Activated CD4-positive, alpha-beta T cell treated with anti-CD3 and anti-CD28 coated beads for 36 hours (primary cell): ENCODE measurements at regions of chr10 and their contacts with region 1.

Region 1: GRCh38 chr10:60032723-60033122 is 126.4 kb upstream of the CCDC6 start:
- DNase-seq: peak; percentile 74
- ATAC-seq: peak; percentile 63
- H3K4me3 Mint-ChIP-seq: no peak overlapping the region
- H3K27ac Mint-ChIP-seq: no peak overlapping the region
- H3K4me1 Mint-ChIP-seq: peaks cover 9% of the 10 kb centered on the region
- H3K27me3 Mint-ChIP-seq: no peaks in the 10 kb centered on the region

Region 2: DNA sequence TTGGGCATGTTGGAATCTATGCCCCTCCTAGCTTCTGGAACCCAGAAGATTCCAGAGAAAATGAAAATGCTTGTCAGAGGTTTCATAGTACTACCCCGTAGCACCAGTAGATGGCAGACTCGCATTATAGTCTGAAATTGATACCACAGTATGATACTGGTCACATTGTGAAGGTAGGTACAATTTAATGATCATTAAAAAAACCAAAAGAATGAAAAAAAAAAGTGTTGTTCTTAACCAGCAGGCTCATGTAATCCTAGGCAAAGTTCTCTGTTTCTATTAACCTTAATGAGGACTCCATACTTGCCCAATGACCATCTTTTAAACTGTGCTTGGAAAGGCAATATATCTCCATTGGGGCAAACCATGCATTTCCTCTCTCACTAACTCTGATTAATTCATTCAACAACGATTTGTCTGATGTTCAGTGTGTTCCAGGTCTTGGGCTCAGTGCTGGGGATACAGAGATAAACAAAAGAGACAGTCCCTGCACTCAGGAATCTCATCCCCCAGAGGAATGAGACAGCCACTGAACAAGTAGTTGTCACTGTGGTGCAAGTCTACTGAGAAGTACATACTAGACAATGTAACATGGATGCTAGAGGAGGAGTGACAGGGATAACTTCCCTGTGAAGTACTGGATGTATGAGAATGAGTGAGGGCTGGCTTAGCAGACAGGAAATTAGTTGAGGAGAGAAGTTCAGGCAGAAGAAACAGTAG is 1079.8 kb before region 1 on chr10:
- CTCF ChIA-PET with region 1: interaction called, 3 read pairs
- POLR2A ChIA-PET with region 1: no interaction called
- intact Hi-C with region 1: loop called in 1 of 2 experiments (anchors 10 kb)
- DNase-seq: peak; percentile 29
- ATAC-seq: no peak
- H3K4me3 Mint-ChIP-seq: no peak overlapping the region
- H3K27ac Mint-ChIP-seq: no peak overlapping the region
- H3K4me1 Mint-ChIP-seq: no peaks in the 10 kb centered on the region
- H3K27me3 Mint-ChIP-seq: peaks cover 3% of the 10 kb centered on the region

Region 3: DNA sequence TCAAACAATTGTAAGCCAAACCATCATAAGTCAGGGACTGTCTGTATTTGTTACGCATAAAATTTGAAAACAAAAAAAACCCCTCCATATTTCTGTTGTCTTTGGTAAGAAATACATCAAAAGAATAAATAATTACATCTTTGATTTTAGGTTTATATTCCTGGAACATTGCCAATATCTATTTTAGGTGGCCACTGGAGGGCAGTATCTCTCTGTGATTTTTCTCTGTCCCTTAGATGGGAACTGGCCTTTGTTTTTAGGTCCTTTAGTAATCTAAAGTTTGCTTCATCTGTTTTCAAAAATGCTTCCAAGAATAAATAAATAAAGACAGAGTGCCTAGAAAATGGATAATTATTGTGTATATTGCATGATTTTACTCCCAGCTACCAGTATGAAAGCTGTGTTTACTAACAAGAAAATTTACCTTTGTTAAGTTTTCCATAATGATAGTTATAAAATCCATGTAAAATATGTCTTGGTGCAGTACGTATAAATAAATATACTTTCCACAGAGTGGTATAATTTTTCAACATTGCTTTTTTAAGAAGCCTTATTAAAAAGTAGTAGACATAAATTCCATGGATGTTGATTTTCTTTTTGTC is 792.0 kb before region 1 on chr10:
- CTCF ChIA-PET with region 1: no interaction called
- POLR2A ChIA-PET with region 1: no interaction called
- intact Hi-C with region 1: loop called in 1 of 2 experiments (anchors 5 kb)
- DNase-seq: peak; percentile 4
- ATAC-seq: no peak
- H3K4me3 Mint-ChIP-seq: no peak overlapping the region
- H3K27ac Mint-ChIP-seq: no peak overlapping the region
- H3K4me1 Mint-ChIP-seq: no peaks in the 10 kb centered on the region
- H3K27me3 Mint-ChIP-seq: peaks cover 5% of the 10 kb centered on the region

Region 4: DNA sequence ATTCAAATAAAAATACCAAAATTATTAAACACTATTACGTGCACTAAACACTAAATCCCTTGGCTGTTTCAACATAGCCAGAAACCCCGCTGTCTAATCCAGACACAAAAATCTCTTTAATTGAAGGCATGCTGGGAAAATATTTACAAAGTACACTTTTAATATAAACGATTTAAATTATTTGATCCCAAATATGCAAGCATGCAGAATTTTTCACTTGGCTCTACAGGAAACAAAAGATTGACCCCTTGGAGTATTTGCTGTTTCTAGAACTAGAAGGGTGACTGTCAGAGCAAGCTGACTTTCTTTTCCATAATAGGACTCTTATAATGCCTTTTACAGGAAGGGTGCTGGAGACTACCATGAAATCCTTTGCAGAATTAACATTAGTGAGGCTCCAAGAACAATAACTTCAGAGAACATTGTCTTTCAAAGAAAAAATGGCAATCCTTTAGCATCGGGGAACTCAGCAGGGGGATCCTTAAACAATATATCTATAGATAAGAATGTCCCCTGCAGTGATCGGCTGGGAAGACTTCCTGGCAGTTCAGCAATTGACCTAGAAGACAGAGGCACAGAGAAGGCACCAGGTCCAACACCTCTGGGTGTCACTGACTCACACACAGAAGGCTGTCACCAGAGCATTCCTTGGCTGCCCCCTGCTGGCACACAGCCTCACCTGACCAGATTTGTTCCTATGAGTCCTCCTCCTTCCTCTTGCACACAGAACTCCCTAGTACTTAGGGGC is 223.7 kb before region 1 on chr10:
- CTCF ChIA-PET with region 1: no interaction called
- POLR2A ChIA-PET with region 1: no interaction called
- intact Hi-C with region 1: loop called (anchors 2 kb)
- DNase-seq: peak; percentile 88
- ATAC-seq: peak; percentile 98
- H3K4me3 Mint-ChIP-seq: no peak overlapping the region
- H3K27ac Mint-ChIP-seq: no peak overlapping the region
- H3K4me1 Mint-ChIP-seq: no peaks in the 10 kb centered on the region
- H3K27me3 Mint-ChIP-seq: no peaks in the 10 kb centered on the region

Region 5: DNA sequence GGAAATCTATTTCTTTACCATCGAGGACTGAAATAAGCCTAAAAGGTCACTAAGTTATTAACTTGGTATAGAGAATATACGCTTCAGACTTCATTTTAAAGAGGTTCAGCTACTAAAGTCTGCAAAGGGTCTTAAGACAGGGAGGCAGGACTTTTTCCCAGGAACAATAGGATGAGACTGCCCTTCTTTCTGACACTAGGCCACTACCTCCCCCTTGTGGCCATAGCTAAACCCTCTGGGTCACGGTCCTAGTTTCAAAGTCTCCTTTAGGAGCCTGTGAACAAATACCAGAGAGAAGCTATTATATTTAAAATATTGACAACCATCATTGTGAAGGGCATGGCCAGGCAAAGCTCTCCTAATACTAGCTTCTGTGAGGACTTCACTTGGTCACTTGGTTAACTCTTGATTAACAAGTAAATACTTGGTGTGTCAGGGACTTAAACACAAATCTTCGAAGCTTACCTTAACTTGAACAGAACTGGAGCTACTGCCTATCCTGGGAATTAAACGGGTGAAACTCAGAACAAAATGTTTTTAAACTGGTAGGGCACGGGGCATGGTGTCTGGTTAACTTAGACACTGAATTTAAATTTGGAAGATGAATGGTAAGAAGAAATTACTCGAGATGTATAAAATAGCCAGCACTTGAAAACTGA is 202.0 kb before region 1 on chr10:
- CTCF ChIA-PET with region 1: no interaction called
- POLR2A ChIA-PET with region 1: no interaction called
- intact Hi-C with region 1: loop called in 1 of 2 experiments (anchors 10 kb)
- DNase-seq: peak; percentile 44
- ATAC-seq: no peak
- H3K4me3 Mint-ChIP-seq: no peak overlapping the region
- H3K27ac Mint-ChIP-seq: no peak overlapping the region
- H3K4me1 Mint-ChIP-seq: peaks cover 40% of the 10 kb centered on the region
- H3K27me3 Mint-ChIP-seq: no peaks in the 10 kb centered on the region

Region 6: DNA sequence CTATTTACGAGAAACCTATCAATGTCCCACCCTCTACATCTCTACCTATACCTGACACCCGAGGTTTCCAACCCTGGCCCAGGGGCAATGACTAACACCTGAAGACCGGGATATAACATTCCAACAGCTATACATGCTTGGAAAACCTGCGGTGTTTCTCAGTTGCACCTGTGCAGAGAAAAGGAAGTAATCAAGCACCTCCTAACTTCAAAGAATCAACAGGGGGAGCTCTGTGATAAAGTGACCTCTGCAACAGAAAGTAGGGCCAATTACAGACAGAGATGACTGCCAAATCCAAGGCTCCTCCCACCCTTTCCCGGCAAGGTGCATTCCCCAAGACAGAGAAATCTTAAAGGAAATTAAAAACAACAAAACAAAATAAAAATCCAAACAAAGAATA is 167.6 kb before region 1 on chr10:
- CTCF ChIA-PET with region 1: interaction called, 3 read pairs
- POLR2A ChIA-PET with region 1: no interaction called
- intact Hi-C with region 1: loop called in 1 of 2 experiments (anchors 5 kb)
- DNase-seq: no peak
- ATAC-seq: peak; percentile 34
- H3K4me3 Mint-ChIP-seq: no peak overlapping the region
- H3K27ac Mint-ChIP-seq: no peak overlapping the region
- H3K4me1 Mint-ChIP-seq: peaks cover 65% of the 10 kb centered on the region
- H3K27me3 Mint-ChIP-seq: no peaks in the 10 kb centered on the region